Head of caudate nucleus (tissue), 42 donors: ENCODE measurements at regions of chrX and their contacts with region 1.

Region 1: GRCh38 chrX:13898083-13898482 is 81.2 kb upstream of the GPM6B start:
- DNase-seq: peak in 29 of 42 donors; percentile 11 to 79 (median 52)

Region 2: GRCh38 chrX:13791559-13791958 is 106.5 kb before region 1 on chrX:
- intact Hi-C with region 1: loop called (anchors 10 kb)
- DNase-seq: peak in 39 of 42 donors; percentile 31 to 84 (median 61)